ENCODE measurements at regions of chr19 and their contacts with region 1.

Region 1: GRCh38 chr19:48506138-48506733 is 5.4 kb downstream of the LMTK3 start:
- DNase-seq: peak in 3 of 10 donors; percentile 53 to 70 (median 68)
- ATAC-seq: peak in 1 of 2 donors; percentile 19
- H3K4me3 Mint-ChIP-seq: no peak overlapping the region
- H3K27ac Mint-ChIP-seq: peak overlapping the region in 2 of 10 donors; percentile 15 to 49
- H3K4me1 Mint-ChIP-seq: peaks cover 15 to 32% (median 26%) of the 10 kb centered on the region in 4 donors
- H3K27me3 Mint-ChIP-seq: no peaks in the 10 kb centered on the region

Region 2: GRCh38 chr19:48445606-48446481 is 60.4 kb before region 1 on chr19 and contains the start of gene GRWD1:
- POLR2A ChIA-PET with region 1: no interaction called
- DNase-seq: peak; percentile 74 to 97 (median 92)
- ATAC-seq: peak; percentile 89 to 93
- H3K4me3 Mint-ChIP-seq: peak within 1 kb of the TSS; percentile 89 to 98 (median 96)
- H3K27ac Mint-ChIP-seq: peak within 1 kb of the TSS; percentile 80 to 99 (median 98)
- H3K4me1 Mint-ChIP-seq: peaks cover 22 to 53% (median 38%) of the 10 kb centered on the region in 4 donors
- H3K27me3 Mint-ChIP-seq: peaks cover 5 to 22% (median 21%) of the 10 kb centered on the region in 5 donors
- polyA plus RNA-seq, gene GRWD1: 32.9 to 59.9 (median 40.3) TPM

Region 3: GRCh38 chr19:48520134-48520533 is 13.9 kb after region 1 on chr19:
- POLR2A ChIA-PET with region 1: no interaction called
- DNase-seq: no peak
- ATAC-seq: no peak
- H3K4me3 Mint-ChIP-seq: no peak overlapping the region
- H3K27ac Mint-ChIP-seq: no peak overlapping the region
- H3K4me1 Mint-ChIP-seq: peaks cover 0 to 2% (median under 1%) of the 10 kb centered on the region in 4 donors
- H3K27me3 Mint-ChIP-seq: peaks cover 0 to 8% (median 4%) of the 10 kb centered on the region in 5 donors

Region 4: GRCh38 chr19:48530066-48530720 is 24.0 kb after region 1 on chr19:
- POLR2A ChIA-PET with region 1: no interaction called
- DNase-seq: no peak
- ATAC-seq: no peak
- H3K4me3 Mint-ChIP-seq: no peak overlapping the region
- H3K27ac Mint-ChIP-seq: no peak overlapping the region
- H3K4me1 Mint-ChIP-seq: no peaks in the 10 kb centered on the region
- H3K27me3 Mint-ChIP-seq: peaks cover 0 to 7% (median 1%) of the 10 kb centered on the region in 5 donors

Region 5: GRCh38 chr19:48588670-48589399 is 82.6 kb after region 1 on chr19:
- POLR2A ChIA-PET with region 1: interaction called, 11 read pairs
- DNase-seq: peak; percentile 69 to 93 (median 85)
- ATAC-seq: peak; percentile 87 to 95
- H3K4me3 Mint-ChIP-seq: peak overlapping the region; percentile 48 to 88 (median 78)
- H3K27ac Mint-ChIP-seq: peak overlapping the region in 8 of 10 donors; percentile 29 to 85 (median 71)
- H3K4me1 Mint-ChIP-seq: peaks cover 13 to 23% (median 20%) of the 10 kb centered on the region in 4 donors
- H3K27me3 Mint-ChIP-seq: peaks cover 0 to 9% (median 4%) of the 10 kb centered on the region in 5 donors

Region 6: GRCh38 chr19:48608798-48609263 is 102.6 kb after region 1 on chr19:
- POLR2A ChIA-PET with region 1: interaction called, 12 read pairs
- DNase-seq: peak in 7 of 10 donors; percentile 24 to 60 (median 46)
- ATAC-seq: peak; percentile 89 to 90
- H3K4me3 Mint-ChIP-seq: peak overlapping the region in 8 of 10 donors; percentile 15 to 71 (median 40)
- H3K27ac Mint-ChIP-seq: peak overlapping the region in 7 of 10 donors; percentile 15 to 83 (median 63)
- H3K4me1 Mint-ChIP-seq: peaks cover 5 to 7% (median 6%) of the 10 kb centered on the region in 4 donors
- H3K27me3 Mint-ChIP-seq: no peaks in the 10 kb centered on the region

Measured in naive thymus-derived CD8-positive, alpha-beta T cell (primary cell).